AG04449 (cell line): ENCODE measurements at regions of chr3 and their contacts with region 1.

Region 1: DNA sequence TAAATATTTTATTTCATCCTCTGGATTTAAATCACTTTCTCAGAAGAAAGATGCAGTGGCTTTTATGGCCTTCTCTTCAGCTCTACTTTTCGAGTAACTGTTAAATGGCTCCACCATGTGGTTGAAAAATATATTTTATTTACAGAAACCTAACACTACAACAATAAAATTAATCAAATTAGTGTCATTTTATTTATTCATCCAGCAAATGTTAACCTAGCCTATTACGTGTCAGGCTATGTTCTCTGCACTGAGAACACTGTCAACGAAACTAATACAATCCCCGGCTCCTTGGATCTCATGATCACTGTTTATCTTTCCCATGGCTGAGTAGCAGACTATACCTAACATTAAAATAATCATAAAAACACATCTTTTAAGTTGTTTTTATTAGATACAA is 148.0 kb upstream of the OSTN start:
- DNase-seq: no peak
- H3K4me3 ChIP-seq: no peak overlapping the region
- CTCF ChIP-seq: peak; percentile 8

Region 2: GRCh38 chr3:190811775-190812480 is 239.1 kb before region 1 on chr3:
- CTCF ChIA-PET with region 1: interaction called, 61 read pairs
- POLR2A ChIA-PET with region 1: no interaction called
- DNase-seq: peak; percentile 3
- H3K4me3 ChIP-seq: no peak overlapping the region
- CTCF ChIP-seq: peak; percentile 55

Region 3: GRCh38 chr3:191066669-191067068 is 15.6 kb after region 1 on chr3:
- CTCF ChIA-PET with region 1: interaction called, 27 read pairs
- POLR2A ChIA-PET with region 1: no interaction called
- DNase-seq: no peak
- H3K4me3 ChIP-seq: no peak overlapping the region
- CTCF ChIP-seq: no peak